ENCODE measurements at regions of chr6 and their contacts with region 1.

Region 1: DNA sequence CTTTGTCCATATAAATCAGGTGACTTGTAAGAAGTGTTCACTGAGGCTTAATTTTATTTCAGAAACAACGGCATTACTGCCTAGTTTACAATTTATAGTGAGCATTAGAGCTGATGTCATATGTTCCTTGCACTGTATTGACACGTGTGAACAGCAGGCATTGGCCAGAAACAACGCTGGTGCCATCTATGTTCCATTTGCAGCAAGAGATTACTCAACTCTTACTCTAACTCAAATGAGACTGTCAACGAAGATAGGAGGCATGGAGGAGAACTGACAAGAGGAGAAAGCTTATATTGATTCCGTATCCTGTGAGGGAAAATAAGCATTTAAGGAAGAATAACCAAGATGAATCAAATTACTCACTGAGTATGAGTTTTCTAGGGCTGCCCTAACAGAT is 48.4 kb downstream of the MTFR2 start:
- DNase-seq: no peak
- CTCF ChIP-seq: no peak

Region 2: GRCh38 chr6:135535989-135536414 is 665.7 kb before region 1 on chr6:
- in situ Hi-C with region 1: loop called (anchors 25 kb)
- DNase-seq: peak; percentile 21
- CTCF ChIP-seq: peak; percentile 61

Region 3: GRCh38 chr6:135675862-135676261 is 525.9 kb before region 1 on chr6:
- in situ Hi-C with region 1: loop called (anchors 25 kb)
- DNase-seq: peak; percentile 35
- CTCF ChIP-seq: peak; percentile 59